Right ventricle myocardium superior (tissue), 1 donor: ENCODE measurements at regions of chr1 and their contacts with region 1.

Region 1: DNA sequence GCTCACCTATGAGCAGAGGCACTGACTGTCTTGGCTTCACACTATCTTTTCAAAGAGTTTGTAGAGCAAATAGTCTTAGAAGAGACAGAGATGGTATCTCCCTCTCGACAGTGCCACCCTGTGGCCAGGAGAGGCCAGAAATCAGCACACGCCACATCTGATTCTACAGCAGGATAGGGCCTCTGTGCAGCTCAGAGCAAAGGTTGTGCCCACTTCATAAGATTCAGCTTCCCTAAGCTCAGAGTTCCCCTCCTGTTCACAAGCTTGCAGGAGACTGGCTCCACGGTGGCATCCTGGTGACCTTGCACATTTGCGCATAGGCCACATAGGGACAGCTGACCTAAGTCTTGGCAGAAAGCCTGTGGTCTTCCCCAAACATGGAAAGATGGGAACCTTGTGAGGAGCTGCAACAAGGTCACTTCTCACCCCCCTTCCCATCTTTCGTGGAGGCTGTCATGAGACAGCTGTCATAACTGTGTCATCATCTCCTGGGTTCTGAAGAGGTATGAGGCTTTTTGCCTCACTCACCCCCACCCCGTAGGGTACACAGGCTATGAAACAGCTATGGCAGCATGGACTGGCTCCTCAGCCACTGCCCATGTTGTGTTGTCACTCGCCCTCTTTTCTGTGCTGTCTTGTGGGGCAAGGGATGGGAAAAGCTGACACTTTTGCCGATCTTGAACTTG is 3.0 kb downstream of the ITLN2 start:
- DNase-seq: peak; percentile 69
- ATAC-seq: peak; percentile 88

Region 2: DNA sequence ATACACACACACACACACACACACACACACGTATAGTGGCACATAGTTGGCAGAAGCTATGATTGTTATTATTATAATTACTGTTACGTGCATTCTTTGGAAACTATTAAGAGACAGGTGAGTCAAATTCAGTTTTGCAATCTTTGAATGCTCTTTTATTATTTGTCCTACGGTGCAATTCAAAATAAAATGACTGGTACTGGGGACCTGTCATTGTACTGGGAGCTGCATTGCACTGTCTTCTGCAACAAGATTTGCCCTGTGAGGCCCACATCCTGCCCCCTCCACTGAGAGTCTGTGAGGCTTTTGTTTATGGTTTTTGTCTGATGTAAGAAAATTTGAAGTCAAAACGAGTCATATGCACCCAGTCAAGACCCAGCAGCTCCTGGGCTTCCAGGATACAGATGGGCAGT is 153.7 kb before region 1 on chr1:
- intact Hi-C with region 1: no loop called
- DNase-seq: no peak
- ATAC-seq: no peak

Region 3: DNA sequence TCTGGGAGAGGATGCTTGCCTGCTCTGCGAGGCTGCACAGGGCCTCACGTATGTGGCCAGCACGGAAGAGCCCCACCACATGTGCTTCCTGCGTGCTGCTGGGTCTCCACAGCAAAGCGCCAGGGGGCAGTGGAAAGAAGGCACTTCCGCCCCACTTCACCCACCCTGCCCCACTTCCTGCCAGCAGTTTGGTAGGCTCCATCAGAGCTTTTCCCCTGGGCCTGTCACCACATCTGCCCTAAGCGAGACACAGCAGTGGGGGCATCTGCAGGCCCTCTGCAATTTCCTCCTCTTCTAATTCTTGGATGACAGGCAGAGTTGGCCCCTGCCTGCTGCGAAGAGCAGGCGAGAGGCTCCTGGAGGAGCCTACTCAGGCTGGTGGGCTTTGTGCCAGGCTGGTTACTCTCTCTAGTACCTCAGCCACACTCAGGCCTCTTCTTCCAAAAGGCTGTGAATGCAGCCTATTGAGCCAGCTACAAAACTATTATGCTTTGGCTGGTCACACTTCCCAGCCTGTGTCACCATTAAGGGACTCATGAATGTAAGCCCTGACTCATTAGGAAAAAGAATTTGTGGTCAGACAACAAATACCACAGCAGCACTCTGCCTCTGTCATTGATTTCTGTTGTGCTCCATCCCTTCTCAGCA is 113.9 kb before region 1 on chr1:
- intact Hi-C with region 1: loop called (anchors 5 kb)
- DNase-seq: peak; percentile 56
- ATAC-seq: peak; percentile 55